CD8-positive, alpha-beta T cell (primary cell): ENCODE measurements at regions of chr9 and their contacts with region 1.

Region 1: DNA sequence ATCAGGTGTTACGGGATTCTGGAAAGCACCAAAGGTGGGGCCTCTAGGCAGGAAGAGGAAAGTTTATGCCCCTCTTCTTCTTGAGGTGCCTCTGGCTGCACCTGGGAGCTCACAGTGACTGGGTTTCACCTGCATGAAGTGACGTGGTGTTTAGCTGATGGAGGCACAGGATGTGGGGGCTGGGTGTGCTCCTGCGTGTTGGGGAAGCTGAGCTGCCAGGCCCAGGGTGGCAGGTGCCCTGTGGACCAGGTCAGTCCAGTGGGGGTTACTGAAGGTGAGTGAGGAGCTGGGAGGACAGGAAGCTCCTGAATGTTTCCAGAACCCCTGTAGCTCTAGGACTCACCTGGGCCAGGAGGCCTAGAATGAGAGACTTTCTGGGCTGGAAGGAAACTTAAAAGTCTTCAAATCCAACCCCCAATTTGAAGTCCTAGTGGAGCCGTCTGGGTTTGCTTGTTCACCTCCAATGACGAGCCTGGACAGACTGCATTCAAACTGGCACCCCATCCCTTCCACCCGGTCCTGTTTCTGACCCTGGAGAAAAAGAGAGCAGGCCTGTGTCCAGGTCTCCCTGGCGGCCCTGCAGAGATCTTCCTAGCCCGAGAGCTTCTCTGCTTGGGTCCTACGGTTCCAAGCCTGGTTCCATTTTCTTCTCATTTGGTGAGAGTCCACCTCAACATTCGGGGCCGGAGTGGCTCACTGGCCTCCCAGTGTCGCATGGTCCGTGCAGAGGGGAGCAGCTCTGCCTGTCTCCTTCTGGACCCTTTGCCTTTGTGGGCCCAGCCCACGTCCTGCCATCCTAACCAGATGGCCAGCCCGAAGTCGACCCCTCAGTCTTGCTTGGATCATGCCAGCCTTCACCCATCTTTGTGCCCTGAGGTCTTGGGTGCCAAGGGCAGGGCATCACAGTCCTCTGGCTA is 22.3 kb downstream of the TRAF1 start:
- DNase-seq: peak in 8 of 9 experiments; percentile 48 to 91 (median 75)
- ATAC-seq: peak; percentile 83
- H3K4me3 ChIP-seq: no peak overlapping the region
- H3K4me3 Mint-ChIP-seq: peak overlapping the region; percentile 44
- H3K27ac ChIP-seq: peak overlapping the region; percentile 68 to 85
- H3K27ac Mint-ChIP-seq: peak overlapping the region; percentile 93
- H3K4me1 ChIP-seq: peaks cover 77% of the 10 kb centered on the region
- H3K4me1 Mint-ChIP-seq: peaks cover 84% of the 10 kb centered on the region
- H3K27me3 ChIP-seq: no peaks in the 10 kb centered on the region
- H3K27me3 Mint-ChIP-seq: no peaks in the 10 kb centered on the region
- CTCF ChIP-seq: no peak

Region 2: DNA sequence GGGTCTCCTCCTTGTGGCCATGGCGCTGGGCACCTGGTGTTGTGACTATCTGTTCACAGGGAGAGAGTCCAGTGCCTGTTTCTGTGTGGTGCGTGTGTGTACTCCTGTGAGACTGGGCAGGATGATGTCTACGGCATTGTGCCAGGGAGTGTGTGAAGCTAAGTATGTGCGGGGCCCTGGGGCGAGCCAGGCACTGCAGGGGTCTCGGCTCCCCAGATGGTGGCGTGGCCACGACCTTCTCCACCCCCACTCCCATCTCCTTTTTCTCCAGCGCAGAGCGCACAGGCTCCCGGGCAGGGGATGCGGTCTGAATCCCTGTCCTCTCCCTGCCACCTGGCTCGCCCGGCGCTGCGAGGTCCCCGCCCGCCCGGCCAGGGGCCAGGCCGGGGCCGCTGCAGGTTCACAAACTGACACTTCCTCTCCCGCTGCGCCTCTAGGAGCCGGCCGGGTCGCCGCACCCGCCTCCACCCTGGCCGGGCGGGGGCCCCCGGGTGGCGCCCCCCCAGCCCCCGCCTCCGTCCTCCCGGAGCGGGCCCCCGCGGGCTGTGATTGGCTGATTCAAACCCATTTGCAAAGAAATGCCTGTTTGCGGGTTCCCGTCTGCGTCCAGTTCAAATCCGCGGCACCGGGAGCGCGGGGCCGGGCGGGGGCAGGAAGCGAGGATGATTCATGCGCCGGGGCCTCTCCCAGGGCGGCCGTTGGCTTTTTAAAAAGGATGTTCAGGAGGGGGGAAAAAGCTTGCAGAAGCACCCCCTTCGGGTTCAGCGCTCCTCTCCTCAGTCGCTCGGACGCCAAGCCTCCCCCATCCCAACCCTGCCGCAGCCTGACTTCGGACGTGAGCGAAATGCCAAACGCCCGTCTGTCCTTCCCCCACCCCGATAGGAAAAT is 28.1 kb before region 1 on chr9:
- CTCF ChIA-PET with region 1: interaction called, 3 read pairs
- POLR2A ChIA-PET with region 1: interaction called, 3 read pairs
- intact Hi-C with region 1: loop called (anchors 2 kb)
- DNase-seq: peak; percentile 28 to 89 (median 85)
- ATAC-seq: peak; percentile 47
- H3K4me3 ChIP-seq: peak overlapping the region; percentile 64 to 76
- H3K4me3 Mint-ChIP-seq: peak overlapping the region; percentile 80
- H3K27ac ChIP-seq: peak overlapping the region; percentile 69 to 85
- H3K27ac Mint-ChIP-seq: peak overlapping the region; percentile 88
- H3K4me1 ChIP-seq: peaks cover 48% of the 10 kb centered on the region
- H3K4me1 Mint-ChIP-seq: peaks cover 56% of the 10 kb centered on the region
- H3K27me3 ChIP-seq: no peaks in the 10 kb centered on the region
- H3K27me3 Mint-ChIP-seq: no peaks in the 10 kb centered on the region
- CTCF ChIP-seq: no peak

Region 3: GRCh38 chr9:120886490-120886967 is 17.8 kb before region 1 on chr9:
- CTCF ChIA-PET with region 1: interaction called, 39 read pairs
- POLR2A ChIA-PET with region 1: interaction called, 1,009 read pairs
- intact Hi-C with region 1: no loop called
- DNase-seq: no peak
- ATAC-seq: no peak
- H3K4me3 ChIP-seq: no peak overlapping the region
- H3K4me3 Mint-ChIP-seq: no peak overlapping the region
- H3K27ac ChIP-seq: no peak overlapping the region
- H3K27ac Mint-ChIP-seq: peak overlapping the region; percentile 50
- H3K4me1 ChIP-seq: peaks cover 60% of the 10 kb centered on the region
- H3K4me1 Mint-ChIP-seq: peaks cover 58% of the 10 kb centered on the region
- H3K27me3 ChIP-seq: no peaks in the 10 kb centered on the region
- H3K27me3 Mint-ChIP-seq: no peaks in the 10 kb centered on the region
- CTCF ChIP-seq: no peak

Region 4: GRCh38 chr9:120892748-120893610 is 11.3 kb before region 1 on chr9:
- CTCF ChIA-PET with region 1: interaction called, 39 read pairs
- POLR2A ChIA-PET with region 1: interaction called, 1,009 read pairs
- intact Hi-C with region 1: loop called in 1 of 2 experiments (anchors 1 kb)
- DNase-seq: peak in 8 of 9 experiments; percentile 46 to 84 (median 70)
- ATAC-seq: peak; percentile 59
- H3K4me3 ChIP-seq: peak overlapping the region in 1 of 2 experiments; percentile 6
- H3K4me3 Mint-ChIP-seq: peak overlapping the region; percentile 30
- H3K27ac ChIP-seq: peak overlapping the region; percentile 68
- H3K27ac Mint-ChIP-seq: peak overlapping the region; percentile 99
- H3K4me1 ChIP-seq: peaks cover 82% of the 10 kb centered on the region
- H3K4me1 Mint-ChIP-seq: peaks cover 68% of the 10 kb centered on the region
- H3K27me3 ChIP-seq: no peaks in the 10 kb centered on the region
- H3K27me3 Mint-ChIP-seq: no peaks in the 10 kb centered on the region
- CTCF ChIP-seq: no peak

Region 5: GRCh38 chr9:120916588-120916987 is 12.3 kb after region 1 on chr9:
- CTCF ChIA-PET with region 1: interaction called, 13 read pairs
- POLR2A ChIA-PET with region 1: interaction called, 1,009 read pairs
- intact Hi-C with region 1: loop called in 1 of 2 experiments (anchors 1 kb)
- DNase-seq: no peak
- ATAC-seq: no peak
- H3K4me3 ChIP-seq: no peak overlapping the region
- H3K4me3 Mint-ChIP-seq: peak overlapping the region; percentile 16
- H3K27ac ChIP-seq: peak overlapping the region in 1 of 2 experiments; percentile 14
- H3K27ac Mint-ChIP-seq: peak overlapping the region; percentile 90
- H3K4me1 ChIP-seq: peaks cover 73% of the 10 kb centered on the region
- H3K4me1 Mint-ChIP-seq: peaks cover 86% of the 10 kb centered on the region
- H3K27me3 ChIP-seq: no peaks in the 10 kb centered on the region
- H3K27me3 Mint-ChIP-seq: no peaks in the 10 kb centered on the region
- CTCF ChIP-seq: no peak

Region 6: GRCh38 chr9:120921661-120922181 is 17.4 kb after region 1 on chr9:
- CTCF ChIA-PET with region 1: interaction called, 20 read pairs
- POLR2A ChIA-PET with region 1: interaction called, 1,009 read pairs
- intact Hi-C with region 1: loop called in 1 of 2 experiments (anchors 1 kb)
- DNase-seq: peak in 1 of 9 experiments; percentile 55
- ATAC-seq: no peak
- H3K4me3 ChIP-seq: peak overlapping the region; percentile 2 to 10
- H3K4me3 Mint-ChIP-seq: peak overlapping the region; percentile 91
- H3K27ac ChIP-seq: peak overlapping the region; percentile 35 to 95
- H3K27ac Mint-ChIP-seq: peak overlapping the region; percentile 98
- H3K4me1 ChIP-seq: peaks cover 96% of the 10 kb centered on the region
- H3K4me1 Mint-ChIP-seq: peaks cover 94% of the 10 kb centered on the region
- H3K27me3 ChIP-seq: no peaks in the 10 kb centered on the region
- H3K27me3 Mint-ChIP-seq: no peaks in the 10 kb centered on the region
- CTCF ChIP-seq: no peak

Region 7: DNA sequence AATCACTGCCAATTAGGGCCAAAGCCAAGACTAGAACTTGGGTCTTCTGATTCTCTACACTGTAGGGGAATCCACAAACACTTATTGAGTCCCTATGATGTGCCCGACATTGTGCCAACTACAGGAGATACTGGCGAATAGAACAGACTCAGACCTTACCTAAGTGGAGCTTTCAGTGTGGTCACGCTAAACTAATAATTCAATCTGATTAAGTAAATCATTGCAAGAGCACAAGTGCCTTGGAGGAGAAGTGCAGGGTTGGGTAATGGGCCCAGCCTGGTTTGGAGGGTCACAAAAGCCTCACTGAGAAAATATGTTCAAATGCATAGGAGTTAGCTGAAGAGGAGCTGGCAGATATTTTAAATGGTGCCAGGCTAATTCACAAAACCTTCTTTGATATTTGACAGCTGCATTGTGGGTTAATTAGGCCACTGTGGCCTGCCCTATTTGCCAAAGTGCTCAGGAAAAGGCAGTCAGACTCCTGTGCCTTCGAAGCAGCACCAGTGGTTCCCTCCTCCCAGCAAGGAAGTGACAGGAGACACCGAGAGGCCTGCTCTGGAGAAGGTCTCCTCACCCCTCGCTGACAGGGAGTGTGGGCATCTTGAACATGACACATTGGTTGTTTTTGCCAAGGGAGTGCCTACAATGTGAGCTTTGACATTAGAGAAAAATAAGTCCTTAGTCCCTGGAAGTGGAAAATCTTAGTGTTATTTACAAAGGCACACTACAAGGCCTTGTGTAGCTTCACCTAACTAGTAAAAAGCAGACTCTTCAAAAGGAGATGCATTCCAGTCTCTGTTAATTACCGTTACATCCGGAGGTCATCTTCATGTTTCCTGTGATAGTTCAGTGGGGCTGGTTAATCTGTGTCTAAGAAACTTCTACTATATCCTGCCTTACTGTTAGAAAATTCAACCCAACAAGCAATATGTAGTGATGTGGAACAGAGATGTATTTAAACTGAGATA is 46.4 kb after region 1 on chr9:
- CTCF ChIA-PET with region 1: no interaction called
- POLR2A ChIA-PET with region 1: no interaction called
- intact Hi-C with region 1: no loop called
- DNase-seq: no peak
- ATAC-seq: no peak
- H3K4me3 ChIP-seq: no peak overlapping the region
- H3K4me3 Mint-ChIP-seq: no peak overlapping the region
- H3K27ac ChIP-seq: no peak overlapping the region
- H3K27ac Mint-ChIP-seq: no peak overlapping the region
- H3K4me1 ChIP-seq: no peaks in the 10 kb centered on the region
- H3K4me1 Mint-ChIP-seq: no peaks in the 10 kb centered on the region
- H3K27me3 ChIP-seq: no peaks in the 10 kb centered on the region
- H3K27me3 Mint-ChIP-seq: no peaks in the 10 kb centered on the region
- CTCF ChIP-seq: no peak